Activated CD4-positive, alpha-beta T cell treated with anti-CD3 and anti-CD28 coated beads for 36 hours (primary cell): ENCODE measurements at regions of chr2 and their contacts with region 1.

Region 1: DNA sequence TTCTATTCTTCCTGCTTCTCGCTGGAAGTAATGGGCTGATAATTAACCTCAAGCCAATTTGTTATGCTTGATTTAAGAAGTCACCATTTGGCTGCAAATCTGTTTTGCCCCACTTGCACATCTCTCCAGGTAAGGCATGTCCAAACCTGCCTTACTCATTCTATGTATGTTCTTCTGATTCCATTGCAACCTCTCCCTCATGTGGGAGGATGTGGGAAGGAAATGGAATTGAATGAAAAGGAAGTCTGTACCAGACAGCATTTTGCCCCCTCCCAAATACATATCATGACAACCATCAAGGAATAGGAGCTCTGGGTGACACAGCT is 131.7 kb downstream of the NRP2 start:
- DNase-seq: no peak
- ATAC-seq: no peak
- H3K4me3 Mint-ChIP-seq: no peak overlapping the region
- H3K27ac Mint-ChIP-seq: no peak overlapping the region
- H3K4me1 Mint-ChIP-seq: no peaks in the 10 kb centered on the region
- H3K27me3 Mint-ChIP-seq: peaks cover 7% of the 10 kb centered on the region

Region 2: DNA sequence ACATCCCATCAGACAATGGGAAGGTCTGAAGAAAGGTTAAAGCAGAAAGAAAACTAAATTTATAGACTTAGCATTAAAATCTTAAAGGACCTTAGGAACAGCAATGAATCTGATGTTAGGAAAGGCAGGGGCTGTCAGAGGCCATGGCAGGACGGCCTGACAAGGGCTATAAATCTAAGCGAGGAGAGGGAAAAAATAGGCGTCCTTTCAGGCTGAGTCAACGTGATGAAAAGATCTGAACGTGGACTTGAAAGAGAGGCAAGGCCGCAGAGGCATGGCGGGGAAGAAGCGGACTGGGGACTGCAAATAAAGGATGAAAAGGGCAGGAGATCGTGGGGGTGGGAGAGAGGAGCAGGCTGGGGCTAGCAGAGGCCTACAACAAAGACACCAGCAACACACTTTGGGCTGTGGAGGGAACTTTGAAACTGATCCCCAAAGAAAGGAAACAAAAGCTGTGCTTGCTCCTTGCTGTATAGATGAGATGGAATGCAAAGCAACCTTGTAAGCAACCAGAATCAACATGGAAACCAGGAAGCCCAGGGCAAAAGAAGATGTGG is 13.9 kb after region 1 on chr2:
- CTCF ChIA-PET with region 1: interaction called, 21 read pairs
- POLR2A ChIA-PET with region 1: no interaction called
- intact Hi-C with region 1: no loop called
- DNase-seq: no peak
- ATAC-seq: no peak
- H3K4me3 Mint-ChIP-seq: no peak overlapping the region
- H3K27ac Mint-ChIP-seq: no peak overlapping the region
- H3K4me1 Mint-ChIP-seq: no peaks in the 10 kb centered on the region
- H3K27me3 Mint-ChIP-seq: peaks cover 8% of the 10 kb centered on the region

Region 3: GRCh38 chr2:205947621-205948495 is 133.9 kb after region 1 on chr2:
- CTCF ChIA-PET with region 1: no interaction called
- POLR2A ChIA-PET with region 1: no interaction called
- intact Hi-C with region 1: no loop called
- DNase-seq: peak; percentile 76
- ATAC-seq: peak; percentile 77
- H3K4me3 Mint-ChIP-seq: no peak overlapping the region
- H3K27ac Mint-ChIP-seq: no peak overlapping the region
- H3K4me1 Mint-ChIP-seq: peaks cover 2% of the 10 kb centered on the region
- H3K27me3 Mint-ChIP-seq: peaks cover 10% of the 10 kb centered on the region

Region 4: GRCh38 chr2:206023183-206023582 is 209.2 kb after region 1 on chr2:
- CTCF ChIA-PET with region 1: no interaction called
- POLR2A ChIA-PET with region 1: no interaction called
- intact Hi-C with region 1: no loop called
- DNase-seq: no peak
- ATAC-seq: no peak
- H3K4me3 Mint-ChIP-seq: no peak overlapping the region
- H3K27ac Mint-ChIP-seq: no peak overlapping the region
- H3K4me1 Mint-ChIP-seq: no peaks in the 10 kb centered on the region
- H3K27me3 Mint-ChIP-seq: no peaks in the 10 kb centered on the region

Region 5: GRCh38 chr2:206642075-206643025 is 828.3 kb after region 1 on chr2 and contains the start of gene FAM237A:
- CTCF ChIA-PET with region 1: no interaction called
- POLR2A ChIA-PET with region 1: no interaction called
- intact Hi-C with region 1: no loop called
- DNase-seq: peak; percentile 56
- ATAC-seq: no peak
- H3K4me3 Mint-ChIP-seq: no peak within 1 kb of the TSS
- H3K27ac Mint-ChIP-seq: no peak within 1 kb of the TSS
- H3K4me1 Mint-ChIP-seq: no peaks in the 10 kb centered on the region
- H3K27me3 Mint-ChIP-seq: peaks cover 24% of the 10 kb centered on the region
- total RNA-seq, gene FAM237A: not detected